ENCODE measurements at regions of chr10 and their contacts with region 1.

Region 1: GRCh38 chr10:125868372-125868975 is 12.6 kb downstream of the DHX32 start:
- DNase-seq: peak; percentile 38
- H3K4me3 Mint-ChIP-seq: no peak overlapping the region
- H3K27ac Mint-ChIP-seq: no peak overlapping the region
- H3K4me1 Mint-ChIP-seq: no peaks in the 10 kb centered on the region
- H3K27me3 Mint-ChIP-seq: no peaks in the 10 kb centered on the region

Region 2: GRCh38 chr10:125538947-125539731 is 329.3 kb before region 1 on chr10:
- CTCF ChIA-PET with region 1: no interaction called
- intact Hi-C with region 1: no loop called
- DNase-seq: no peak
- H3K4me3 Mint-ChIP-seq: no peak overlapping the region
- H3K27ac Mint-ChIP-seq: no peak overlapping the region
- H3K4me1 Mint-ChIP-seq: no peaks in the 10 kb centered on the region
- H3K27me3 Mint-ChIP-seq: peaks cover 3% of the 10 kb centered on the region

Region 3: GRCh38 chr10:126065746-126066492 is 197.4 kb after region 1 on chr10:
- CTCF ChIA-PET with region 1: no interaction called
- intact Hi-C with region 1: no loop called
- DNase-seq: no peak
- H3K4me3 Mint-ChIP-seq: no peak overlapping the region
- H3K27ac Mint-ChIP-seq: no peak overlapping the region
- H3K4me1 Mint-ChIP-seq: no peaks in the 10 kb centered on the region
- H3K27me3 Mint-ChIP-seq: no peaks in the 10 kb centered on the region

Region 4: DNA sequence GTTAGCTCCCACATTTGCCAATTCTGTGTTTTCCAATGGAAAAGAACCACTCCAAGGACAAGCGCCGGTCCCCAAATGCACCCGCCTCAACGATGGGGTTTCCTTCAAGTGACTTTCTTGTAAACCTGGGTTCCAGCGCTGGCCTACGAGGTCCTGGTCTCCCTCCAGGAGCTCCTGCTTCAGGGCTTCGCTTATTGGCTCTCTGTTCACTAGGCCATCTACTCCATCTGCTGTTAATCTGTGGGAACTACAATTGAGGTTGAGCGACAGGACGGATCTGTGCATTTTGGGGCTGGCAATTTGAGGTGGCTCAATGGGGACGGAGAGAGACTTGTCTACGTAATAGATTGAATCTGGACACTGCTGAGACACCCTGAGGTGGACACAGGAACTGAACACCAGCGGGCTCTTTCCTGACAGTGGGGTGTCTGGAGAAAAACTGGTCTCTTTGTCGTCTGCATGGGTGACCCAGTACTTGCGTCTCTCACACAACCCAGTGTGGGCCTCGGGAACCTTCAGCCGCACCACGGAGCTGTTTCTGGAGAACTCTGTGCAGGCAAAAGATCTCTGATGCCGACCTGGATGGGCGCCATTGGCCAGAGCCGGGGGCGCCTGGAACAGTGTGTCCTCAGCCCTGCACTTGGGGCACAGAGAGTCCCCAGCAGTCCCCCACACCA is 635.7 kb after region 1 on chr10:
- CTCF ChIA-PET with region 1: no interaction called
- intact Hi-C with region 1: loop called (anchors 2 kb)
- DNase-seq: no peak
- H3K4me3 Mint-ChIP-seq: no peak overlapping the region
- H3K27ac Mint-ChIP-seq: no peak overlapping the region
- H3K4me1 Mint-ChIP-seq: no peaks in the 10 kb centered on the region
- H3K27me3 Mint-ChIP-seq: no peaks in the 10 kb centered on the region

Region 5: GRCh38 chr10:126749015-126749655 is 880.7 kb after region 1 on chr10:
- CTCF ChIA-PET with region 1: no interaction called
- intact Hi-C with region 1: loop called (anchors 2 kb)
- DNase-seq: peak; percentile 69
- H3K4me3 Mint-ChIP-seq: no peak overlapping the region
- H3K27ac Mint-ChIP-seq: no peak overlapping the region
- H3K4me1 Mint-ChIP-seq: no peaks in the 10 kb centered on the region
- H3K27me3 Mint-ChIP-seq: no peaks in the 10 kb centered on the region